BJ (cell line): ENCODE measurements at regions of chr7 and their contacts with region 1.

Region 1: DNA sequence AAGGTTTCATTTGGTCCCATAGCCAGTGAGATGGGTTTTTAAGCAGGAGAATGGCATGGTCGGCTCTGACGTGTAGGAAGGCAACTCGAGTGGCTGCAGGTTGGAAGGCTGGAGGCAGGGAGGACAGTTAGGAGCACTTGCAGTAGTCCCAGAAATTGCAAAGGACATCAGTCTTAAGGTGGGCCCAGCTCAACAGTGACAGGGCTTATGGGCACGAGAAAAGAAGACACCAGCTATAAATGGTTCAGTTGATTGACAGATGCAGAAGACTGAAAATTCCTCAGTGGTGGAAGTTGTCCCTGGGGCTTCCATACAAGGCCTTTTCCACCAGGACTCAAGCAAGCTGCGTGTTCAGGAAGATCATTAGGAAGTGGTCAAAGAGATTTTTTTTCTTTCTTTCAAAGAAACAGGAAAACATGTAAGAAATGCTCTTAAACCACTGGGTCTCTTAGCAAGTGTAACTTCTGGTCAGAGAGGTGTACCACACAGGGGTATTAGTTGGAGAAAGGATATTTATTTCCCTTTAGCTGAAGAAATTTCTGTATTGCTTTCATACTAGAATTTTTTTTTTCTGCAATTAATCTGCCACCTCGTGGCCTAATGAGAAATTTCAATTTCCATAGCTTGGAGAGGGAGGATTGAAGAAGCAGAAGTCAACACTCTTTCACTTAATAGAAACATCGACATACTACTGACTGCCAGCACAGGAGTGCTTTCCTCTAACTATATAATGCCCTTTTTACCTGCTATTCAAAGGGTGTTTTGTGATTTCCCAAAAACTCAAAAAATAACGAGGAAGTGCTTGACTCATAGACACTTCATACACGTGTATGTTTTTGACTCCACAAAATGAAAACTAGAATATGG is 177.4 kb upstream of the NAMPT start:
- DNase-seq: no peak
- H3K4me3 ChIP-seq: no peak overlapping the region
- H3K27me3 ChIP-seq: no peaks in the 10 kb centered on the region
- CTCF ChIP-seq: peak; percentile 48

Region 2: DNA sequence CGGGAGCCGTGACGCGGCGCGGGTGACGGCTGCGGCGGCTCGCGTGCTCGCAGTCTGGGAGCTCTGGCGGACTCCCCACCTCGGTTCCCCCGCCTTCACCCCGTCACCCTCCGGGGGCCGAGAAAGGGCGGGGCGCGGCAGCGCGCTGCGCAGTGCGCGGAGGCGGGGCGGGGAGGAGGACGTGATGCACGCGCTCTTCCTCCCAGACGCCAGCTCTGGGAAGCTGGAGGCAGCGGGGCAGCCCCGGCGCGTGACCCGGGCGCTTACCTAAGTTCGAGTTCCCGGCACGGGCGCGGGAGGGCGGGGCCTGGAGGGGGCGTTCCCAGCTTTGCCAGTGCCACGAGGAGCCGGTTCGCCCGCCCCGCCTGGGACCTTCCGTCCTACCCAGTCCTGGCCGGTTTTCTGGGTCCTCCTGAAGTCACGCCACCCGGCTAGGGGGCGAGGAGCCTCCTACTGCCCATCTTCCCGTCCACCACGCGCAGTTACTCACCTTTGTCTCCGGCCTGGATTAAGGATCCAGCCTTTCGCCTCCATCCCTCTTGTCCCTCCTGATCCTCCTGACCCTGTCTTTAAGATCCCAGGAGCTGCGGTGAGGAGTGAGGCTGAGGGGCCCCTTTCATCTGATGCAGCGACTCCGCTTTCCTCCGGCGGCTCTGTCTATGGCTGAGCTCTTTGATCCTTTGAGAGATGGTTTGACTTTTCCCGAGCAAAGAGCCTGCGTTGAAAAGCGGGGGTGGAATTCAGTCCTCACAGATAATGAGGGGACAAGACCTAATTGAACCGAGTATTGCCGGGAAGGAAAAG is 177.0 kb before region 1 on chr7:
- CTCF ChIA-PET with region 1: interaction called, 11 read pairs
- POLR2A ChIA-PET with region 1: interaction called, 4 read pairs
- DNase-seq: peak; percentile 91
- H3K4me3 ChIP-seq: peak overlapping the region; percentile 71
- H3K27me3 ChIP-seq: no peaks in the 10 kb centered on the region
- CTCF ChIP-seq: no peak

Region 3: DNA sequence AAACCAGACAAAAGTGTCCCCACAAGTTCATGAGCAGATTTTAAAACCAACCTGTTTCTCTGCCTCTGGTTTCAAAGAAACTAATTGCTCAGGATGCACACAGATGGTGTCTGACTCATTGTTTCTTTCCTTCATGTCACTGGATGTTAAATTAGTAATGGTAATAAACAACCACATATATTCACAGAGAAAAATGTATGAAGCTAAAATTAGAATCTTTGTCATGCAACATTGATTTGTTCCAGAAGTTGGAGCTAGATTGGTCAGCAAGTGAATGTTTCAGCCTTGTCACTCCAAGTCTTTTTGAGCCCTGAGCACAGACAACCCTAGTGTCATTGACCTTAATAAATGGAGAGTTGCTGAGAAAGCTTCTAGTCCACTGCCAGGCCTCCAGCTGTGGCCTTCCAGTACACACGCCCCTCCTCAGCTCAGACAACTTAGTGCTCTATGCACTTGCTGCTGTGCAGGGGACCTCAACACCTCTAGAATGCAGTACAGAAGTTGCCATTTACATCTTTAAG is 22.9 kb after region 1 on chr7:
- CTCF ChIA-PET with region 1: interaction called, 13 read pairs
- POLR2A ChIA-PET with region 1: no interaction called
- DNase-seq: peak; percentile 91
- H3K4me3 ChIP-seq: no peak overlapping the region
- H3K27me3 ChIP-seq: no peaks in the 10 kb centered on the region
- CTCF ChIP-seq: no peak